ENCODE measurements at regions of chr1 and their contacts with region 1.

Region 1: GRCh38 chr1:58727363-58727762 is 27.5 kb upstream of the MYSM1 start:
- DNase-seq: peak; percentile 97
- H3K4me3 Mint-ChIP-seq: peak overlapping the region; percentile 28
- H3K27ac Mint-ChIP-seq: peak overlapping the region; percentile 74
- H3K4me1 Mint-ChIP-seq: peaks cover 16% of the 10 kb centered on the region
- H3K27me3 Mint-ChIP-seq: no peaks in the 10 kb centered on the region
- CTCF ChIP-seq: no peak

Region 2: DNA sequence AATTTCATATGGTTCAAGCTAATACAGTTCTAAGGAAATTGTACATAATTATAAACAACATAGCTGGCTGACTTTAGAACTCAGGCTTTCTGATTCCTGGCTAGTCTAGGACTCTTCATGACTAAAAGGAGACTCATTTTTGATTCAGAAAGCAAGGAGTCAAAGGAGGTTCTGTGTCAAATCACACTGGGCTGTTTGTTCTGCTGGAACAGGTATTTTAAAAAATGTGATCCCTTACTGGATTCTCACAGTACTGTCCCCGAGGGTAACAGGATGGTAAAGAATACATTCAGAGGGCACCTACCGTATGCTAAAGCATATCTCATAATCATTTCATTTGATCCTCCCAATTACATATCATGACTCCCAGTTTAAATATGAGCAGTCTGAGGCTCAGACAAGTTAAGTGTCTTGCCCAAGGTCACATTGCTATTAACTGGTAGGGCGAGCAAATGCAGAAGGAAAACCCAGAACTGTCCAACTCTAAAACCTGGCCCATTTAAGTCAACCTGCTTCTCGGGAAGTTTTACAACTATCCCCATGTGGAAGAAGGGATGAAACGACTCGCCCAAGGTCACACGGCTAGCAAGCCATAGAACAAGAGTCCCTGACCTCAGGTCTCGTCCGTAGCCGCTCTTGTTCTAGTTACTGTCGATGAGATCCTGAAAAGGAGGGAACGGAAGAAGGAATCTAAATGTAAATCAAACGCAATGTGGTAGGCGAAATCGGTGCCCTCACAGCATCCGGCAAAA is 28.2 kb before region 1 on chr1:
- CTCF ChIA-PET with region 1: interaction called, 3 read pairs
- POLR2A ChIA-PET with region 1: interaction called, 11 read pairs
- intact Hi-C with region 1: no loop called
- DNase-seq: peak; percentile 34
- H3K4me3 Mint-ChIP-seq: peak overlapping the region; percentile 91
- H3K27ac Mint-ChIP-seq: peak overlapping the region; percentile 99
- H3K4me1 Mint-ChIP-seq: no peaks in the 10 kb centered on the region
- H3K27me3 Mint-ChIP-seq: no peaks in the 10 kb centered on the region
- CTCF ChIP-seq: no peak

Region 3: DNA sequence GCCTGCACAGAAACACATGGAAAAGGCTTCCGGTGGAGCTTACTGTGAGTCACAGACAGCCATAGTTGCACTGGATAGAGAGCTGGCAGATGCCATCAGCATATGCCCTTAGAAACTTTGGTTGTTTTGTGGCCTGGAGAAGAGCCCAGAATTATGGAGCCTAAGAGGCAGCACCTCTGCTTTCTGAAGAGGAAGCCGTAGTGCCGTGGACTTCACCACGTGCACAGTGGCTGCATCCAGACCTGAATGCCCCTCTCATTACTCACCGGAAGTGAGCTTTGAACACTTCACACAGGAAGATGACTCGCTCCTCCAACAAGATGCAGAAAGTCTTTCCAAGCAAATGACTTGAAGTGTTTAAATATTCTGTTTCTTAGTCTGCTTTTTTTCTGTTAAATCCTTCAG is 28.1 kb after region 1 on chr1:
- CTCF ChIA-PET with region 1: no interaction called
- POLR2A ChIA-PET with region 1: interaction called, 11 read pairs
- intact Hi-C with region 1: no loop called
- DNase-seq: peak; percentile 98
- H3K4me3 Mint-ChIP-seq: peak overlapping the region; percentile 49
- H3K27ac Mint-ChIP-seq: peak overlapping the region; percentile 91
- H3K4me1 Mint-ChIP-seq: peaks cover 39% of the 10 kb centered on the region
- H3K27me3 Mint-ChIP-seq: no peaks in the 10 kb centered on the region
- CTCF ChIP-seq: no peak